ENCODE measurements at regions of chr3 and their contacts with region 1.

Region 1: DNA sequence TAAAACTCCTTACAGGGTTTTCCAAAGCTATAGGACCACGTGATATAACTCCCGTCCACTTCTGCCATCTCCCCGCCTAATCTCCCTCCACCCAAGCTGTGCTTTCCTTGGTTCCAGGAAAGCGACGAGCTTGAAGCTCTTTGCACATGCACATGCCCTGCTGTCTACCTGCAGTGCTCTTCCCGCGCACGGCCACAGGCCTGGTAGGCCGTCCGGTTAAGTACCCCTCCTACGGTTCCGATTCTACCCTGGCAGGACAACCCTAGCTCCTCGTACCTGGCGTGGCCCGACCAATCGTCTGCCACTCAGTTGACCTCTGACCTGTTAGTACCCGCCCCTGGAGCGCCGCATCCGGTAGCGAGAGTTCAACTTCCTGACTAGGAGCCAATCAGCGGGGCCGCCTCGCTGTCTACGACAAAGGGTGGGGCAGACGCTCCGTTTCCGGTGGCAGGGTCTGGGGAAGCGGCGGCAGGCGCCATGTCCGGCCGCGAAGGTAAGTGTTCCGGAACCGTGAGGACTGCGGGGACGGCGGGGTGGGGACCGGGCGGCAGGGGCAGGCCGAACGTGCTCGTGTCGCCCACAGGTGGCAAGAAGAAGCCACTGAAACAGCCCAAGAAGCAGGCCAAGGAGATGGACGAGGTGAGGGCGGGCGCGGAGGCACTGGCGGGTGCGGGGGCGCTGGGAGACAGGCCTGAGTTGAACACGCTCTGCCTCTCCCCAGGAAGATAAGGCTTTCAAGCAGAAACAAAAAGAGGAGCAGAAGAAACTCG is at the starts of genes CCDC51 and TMA7:
- DNase-seq: peak; percentile 99
- ATAC-seq: peak; percentile 98
- total RNA-seq, gene CCDC51: 11.9 TPM
- total RNA-seq, gene TMA7: 237 TPM

Region 2: DNA sequence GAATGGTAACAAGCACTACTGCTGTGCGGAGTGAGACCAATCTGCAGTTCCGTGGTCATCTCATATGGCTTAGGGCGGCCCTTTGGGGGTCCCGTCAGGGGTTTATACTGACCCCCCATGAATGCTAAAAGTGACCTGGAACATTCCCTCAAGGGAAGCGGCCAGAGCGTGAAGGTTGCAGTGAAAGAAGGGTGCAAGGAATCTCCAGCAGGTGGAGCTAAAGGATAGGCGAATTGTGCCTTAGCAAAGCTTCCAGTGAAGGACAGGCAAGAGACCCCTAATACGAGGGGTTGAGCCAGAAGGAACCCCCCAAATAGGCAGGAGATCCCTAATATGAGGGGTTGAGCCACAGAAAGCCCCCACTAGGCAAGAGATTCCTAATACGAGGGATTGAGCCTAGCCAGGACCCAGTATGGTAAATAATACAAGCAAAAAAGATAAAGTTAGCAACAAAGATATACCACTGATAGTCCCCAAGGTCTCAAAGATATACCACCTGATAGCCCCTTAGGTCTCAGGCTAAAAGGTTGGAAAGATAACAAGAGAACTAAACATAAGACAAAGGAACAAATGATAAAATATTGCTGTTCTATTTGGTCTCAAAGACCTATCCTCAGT is 166.3 kb before region 1 on chr3:
- intact Hi-C with region 1: loop called (anchors 5 kb)
- DNase-seq: no peak
- ATAC-seq: peak; percentile 60

Region 3: DNA sequence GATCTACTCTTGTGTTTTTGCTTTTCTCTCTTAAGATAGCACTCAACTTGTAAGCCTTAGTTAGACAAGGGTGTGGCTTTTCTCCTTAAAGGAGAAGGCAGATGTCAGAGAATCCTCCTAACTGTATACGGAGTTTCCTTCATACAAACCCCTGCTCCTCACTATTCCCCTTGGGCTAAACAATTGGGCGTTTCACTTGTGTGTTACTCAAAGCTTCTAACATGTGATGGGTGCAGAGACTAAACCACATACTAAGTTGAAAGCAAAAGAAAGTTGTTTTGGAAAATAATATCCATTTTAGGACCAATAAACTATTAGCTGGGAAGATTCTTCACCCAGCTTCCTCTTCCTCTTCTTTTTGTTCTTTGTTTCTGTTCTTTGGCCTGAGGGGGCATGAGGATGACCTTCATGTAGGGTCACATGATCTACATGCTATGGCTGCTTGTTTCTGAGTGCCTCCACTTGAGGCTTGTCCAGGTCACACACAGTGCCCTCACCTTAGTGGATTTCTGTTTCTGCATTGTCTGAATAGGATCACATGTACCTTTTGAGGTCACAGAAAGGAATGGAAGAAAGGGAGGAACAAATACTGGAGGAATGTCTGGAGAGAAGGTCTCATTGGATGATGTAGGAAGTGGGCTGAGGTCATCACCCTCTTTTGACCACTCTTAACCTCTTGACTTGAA is 121.1 kb before region 1 on chr3:
- intact Hi-C with region 1: no loop called
- DNase-seq: no peak
- ATAC-seq: no peak

Region 4: DNA sequence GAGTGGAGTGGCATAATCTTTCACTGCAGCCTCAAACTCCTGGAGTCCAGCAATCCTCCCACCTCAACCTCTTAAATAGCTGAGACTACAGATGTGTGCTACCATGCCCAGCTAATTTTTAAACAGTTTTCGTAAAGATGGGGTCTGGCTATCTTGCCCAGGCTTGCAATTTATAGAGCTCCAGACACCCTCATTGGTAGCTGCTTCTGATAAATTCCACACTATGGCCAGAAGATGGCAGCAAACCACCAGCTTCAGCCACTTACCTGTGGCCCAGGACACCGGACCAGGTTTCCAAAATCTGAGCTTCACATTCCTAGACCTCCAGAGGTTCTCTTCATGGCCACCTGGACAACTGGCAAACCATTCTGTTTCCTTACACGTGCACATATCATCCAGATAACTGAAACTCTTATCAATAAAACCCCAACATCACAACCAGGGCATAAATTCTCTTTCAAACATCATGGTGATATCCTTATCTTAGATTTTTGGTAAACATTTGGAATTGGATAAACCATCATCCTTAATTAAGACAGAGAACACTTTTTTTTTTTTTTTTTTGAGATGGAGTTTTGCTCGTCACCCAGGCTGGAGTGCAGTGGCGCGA is 39.1 kb before region 1 on chr3:
- intact Hi-C with region 1: loop called (anchors 2 kb)
- DNase-seq: no peak
- ATAC-seq: peak; percentile 77

Region 5: DNA sequence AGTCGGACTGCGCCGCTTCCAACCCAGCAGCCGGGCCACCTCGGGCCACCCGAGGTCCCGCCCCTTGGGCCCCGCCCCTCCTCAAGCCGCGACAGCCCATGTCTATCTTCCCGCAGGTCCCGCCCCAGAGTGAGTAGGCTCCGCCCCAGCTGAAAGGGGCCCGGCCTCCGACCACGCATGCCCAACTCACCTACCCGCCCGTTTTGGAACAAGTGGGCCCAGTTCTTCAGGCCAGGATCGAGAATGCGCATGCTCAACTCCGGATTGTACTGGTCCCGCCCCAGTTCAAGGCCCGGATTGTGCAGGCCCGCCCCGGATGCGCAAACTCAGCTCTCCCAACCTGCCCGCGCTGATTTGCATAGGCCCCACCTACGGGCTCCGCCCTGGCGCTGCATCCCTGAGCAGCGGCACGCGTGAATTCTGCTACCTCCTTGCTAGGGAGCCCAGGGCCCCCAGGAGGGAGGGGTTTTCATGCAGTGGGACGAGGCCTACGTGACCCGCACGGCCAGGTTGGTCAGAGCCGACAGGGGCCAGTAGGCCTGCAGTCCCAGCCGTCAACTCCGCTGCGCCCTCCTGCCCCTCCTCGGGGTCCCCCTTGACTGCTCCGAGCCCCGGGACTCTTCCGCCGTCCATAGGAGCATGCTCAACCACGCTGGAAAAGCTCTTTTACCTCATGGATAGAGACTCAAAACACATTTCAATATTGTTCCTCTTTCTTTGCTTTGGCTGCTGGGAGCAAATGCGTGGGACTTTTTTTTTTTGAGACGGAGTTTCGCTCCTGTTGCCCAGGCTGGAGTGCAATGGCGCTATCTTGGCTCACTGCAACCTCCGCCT is 117.0 kb after region 1 on chr3 and contains the start of gene PFKFB4:
- intact Hi-C with region 1: no loop called
- DNase-seq: peak; percentile 100
- ATAC-seq: peak; percentile 91
- total RNA-seq, gene PFKFB4: 1.1 TPM